HepG2 (cell line): ENCODE measurements at regions of chr6 and their contacts with region 1.

Region 1: GRCh38 chr6:7851780-7852179 is 58.8 kb downstream of the TXNDC5 start:
- DNase-seq: no peak
- ATAC-seq: no peak
- H3K4me3 ChIP-seq: no peak overlapping the region
- H3K27ac ChIP-seq: no peak overlapping the region
- H3K4me1 ChIP-seq: peaks cover 13% of the 10 kb centered on the region
- H3K27me3 ChIP-seq: peaks cover 0 to 17% of the 10 kb centered on the region in 2 experiments; a peak in 1 of 5 replicates
- CTCF ChIP-seq: no peak
- EP300 ChIP-seq: no peak
- POLR2A ChIP-seq: no peak
- RAD21 ChIP-seq: no peak

Region 2: DNA sequence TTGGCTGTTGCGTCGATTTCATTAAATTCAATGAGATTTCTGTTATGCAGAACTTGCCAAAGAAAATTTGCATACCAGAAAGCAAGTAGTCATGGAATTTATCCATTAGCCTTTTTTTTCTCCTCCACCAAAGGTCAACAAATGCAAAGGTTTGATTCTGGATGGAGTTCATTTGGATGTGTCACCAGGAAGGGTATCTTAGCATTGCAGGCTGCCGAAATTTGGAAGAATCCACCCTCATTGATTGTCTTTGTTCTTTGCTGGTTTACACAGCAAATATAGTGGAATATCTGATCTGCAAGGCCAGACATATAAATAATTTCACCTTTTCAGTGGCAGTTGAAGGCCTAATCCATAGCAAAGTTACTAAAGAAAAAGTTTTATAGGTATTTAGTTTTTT is 812.9 kb after region 1 on chr6:
- CTCF ChIA-PET with region 1: no interaction called
- POLR2A ChIA-PET with region 1: no interaction called
- in situ Hi-C with region 1: no loop called
- intact Hi-C with region 1: loop called (anchors 5 kb)
- DNase-seq: no peak
- ATAC-seq: no peak
- H3K4me3 ChIP-seq: no peak overlapping the region
- H3K27ac ChIP-seq: no peak overlapping the region
- H3K4me1 ChIP-seq: peaks cover 12% of the 10 kb centered on the region
- H3K27me3 ChIP-seq: no peaks in the 10 kb centered on the region
- CTCF ChIP-seq: no peak
- EP300 ChIP-seq: no peak
- POLR2A ChIP-seq: no peak
- RAD21 ChIP-seq: no peak